ENCODE measurements at regions of chr3 and their contacts with region 1.

Region 1: GRCh38 chr3:64030741-64031140 is 7.4 kb upstream of the PSMD6 start:
- DNase-seq: peak; percentile 72 to 90
- ATAC-seq: peak; percentile 93
- H3K4me3 ChIP-seq: no peak overlapping the region
- H3K27ac ChIP-seq: no peak overlapping the region
- H3K4me1 ChIP-seq: no peaks in the 10 kb centered on the region
- H3K27me3 ChIP-seq: no peaks in the 10 kb centered on the region

Region 2: GRCh38 chr3:64049136-64049535 is 18.4 kb after region 1 on chr3:
- intact Hi-C with region 1: no loop called
- DNase-seq: no peak
- ATAC-seq: no peak
- H3K4me3 ChIP-seq: no peak overlapping the region
- H3K27ac ChIP-seq: no peak overlapping the region
- H3K4me1 ChIP-seq: no peaks in the 10 kb centered on the region
- H3K27me3 ChIP-seq: no peaks in the 10 kb centered on the region

Region 3: DNA sequence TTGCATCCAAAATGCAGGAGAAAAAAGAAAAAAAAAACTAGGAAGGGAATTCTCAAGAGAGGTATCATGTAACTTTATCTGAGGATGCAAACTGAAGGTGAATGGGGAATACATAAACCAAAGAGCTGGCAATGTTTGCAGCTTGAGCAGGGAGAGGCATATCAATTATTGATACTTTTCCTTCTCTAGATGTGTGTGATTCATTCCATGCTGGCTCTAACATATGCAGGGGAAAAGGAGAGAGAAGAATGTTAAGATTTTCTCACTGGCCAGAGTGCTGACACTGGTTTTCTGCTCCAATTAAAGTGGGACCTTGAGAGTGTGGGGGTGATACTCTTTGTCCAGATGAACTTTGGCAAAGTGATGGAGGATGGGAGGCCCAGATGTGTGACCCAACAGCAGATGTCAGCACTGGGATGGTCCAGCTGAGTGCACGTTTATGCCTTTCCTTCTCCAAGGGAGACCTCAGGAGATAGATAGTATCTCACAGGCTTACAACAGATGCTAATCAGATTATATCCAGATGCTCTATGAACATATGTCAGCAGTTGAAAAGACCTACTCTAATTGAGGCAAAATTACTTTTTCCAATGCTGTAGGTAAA is 42.5 kb after region 1 on chr3:
- intact Hi-C with region 1: no loop called
- DNase-seq: no peak
- ATAC-seq: no peak
- H3K4me3 ChIP-seq: no peak overlapping the region
- H3K27ac ChIP-seq: no peak overlapping the region
- H3K4me1 ChIP-seq: no peaks in the 10 kb centered on the region
- H3K27me3 ChIP-seq: no peaks in the 10 kb centered on the region

Region 4: GRCh38 chr3:64163755-64164148 is 133.0 kb after region 1 on chr3:
- intact Hi-C with region 1: loop called (anchors 5 to 10 kb)
- DNase-seq: no peak
- ATAC-seq: no peak
- H3K4me3 ChIP-seq: no peak overlapping the region
- H3K27ac ChIP-seq: no peak overlapping the region
- H3K4me1 ChIP-seq: peaks cover 2 to 6% of the 10 kb centered on the region in 2 donors
- H3K27me3 ChIP-seq: no peaks in the 10 kb centered on the region

Region 5: GRCh38 chr3:64399205-64399800 is 368.6 kb after region 1 on chr3:
- intact Hi-C with region 1: loop called (anchors 1 to 2 kb)
- DNase-seq: no peak
- ATAC-seq: peak; percentile 81
- H3K4me3 ChIP-seq: no peak overlapping the region
- H3K27ac ChIP-seq: no peak overlapping the region
- H3K4me1 ChIP-seq: no peaks in the 10 kb centered on the region
- H3K27me3 ChIP-seq: no peaks in the 10 kb centered on the region

Region 6: DNA sequence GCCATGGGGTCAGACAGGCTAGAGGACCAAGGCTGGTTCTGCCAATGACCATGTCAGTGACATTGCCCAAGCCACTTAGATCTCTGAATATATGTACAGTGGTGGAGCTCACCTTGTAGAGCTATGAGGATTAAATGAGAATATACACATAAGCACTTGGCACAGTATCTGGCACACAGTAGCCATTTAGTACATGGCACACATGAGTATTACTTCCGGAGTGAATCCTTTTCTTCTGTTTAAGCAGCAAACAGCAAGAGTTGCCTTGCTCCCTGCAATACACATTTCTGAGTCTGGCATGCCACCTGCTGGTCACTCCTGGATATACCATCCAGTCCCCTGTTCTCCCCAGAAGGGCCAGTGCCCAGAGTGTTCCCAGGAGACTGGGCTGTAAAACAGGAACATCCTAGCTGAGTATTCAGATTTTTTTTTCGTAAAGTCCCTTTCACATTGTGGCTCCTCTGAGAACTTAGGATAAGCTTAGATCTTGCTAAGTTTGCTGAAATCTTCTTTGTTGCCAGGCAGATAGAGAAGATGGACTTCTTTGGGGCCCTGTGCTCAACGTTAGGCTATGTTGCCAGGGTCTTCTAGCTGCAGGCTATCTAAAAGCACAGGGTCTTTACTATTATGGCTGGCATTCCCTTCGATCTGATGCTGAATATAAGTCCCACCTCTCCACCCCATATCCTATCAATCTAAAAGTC is 453.7 kb after region 1 on chr3:
- intact Hi-C with region 1: loop called (anchors 2 kb)
- DNase-seq: peak; percentile 81 to 92
- ATAC-seq: peak; percentile 94
- H3K4me3 ChIP-seq: no peak overlapping the region
- H3K27ac ChIP-seq: no peak overlapping the region
- H3K4me1 ChIP-seq: no peaks in the 10 kb centered on the region
- H3K27me3 ChIP-seq: no peaks in the 10 kb centered on the region

Measured in aorta (tissue), 5 donors.